Ovary (tissue), 10 donors: ENCODE measurements at regions of chr19 and their contacts with region 1.

Region 1: GRCh38 chr19:55503502-55504251 is 15.4 kb downstream of the SSC5D start:
- DNase-seq: peak; percentile 89 to 94 (median 91)
- H3K4me3 ChIP-seq: peak overlapping the region; percentile 17
- H3K27ac ChIP-seq: no peak overlapping the region
- H3K4me1 ChIP-seq: no peaks in the 10 kb centered on the region
- H3K27me3 ChIP-seq: no peaks in the 10 kb centered on the region
- CTCF ChIP-seq: peak; percentile 88 to 96 (median 94)
- EP300 ChIP-seq: no peak
- POLR2A ChIP-seq: peak; percentile 15

Region 2: GRCh38 chr19:55146078-55146704 is 357.5 kb before region 1 on chr19:
- intact Hi-C with region 1: loop called in 2 of 4 experiments (anchors 10 kb)
- DNase-seq: no peak
- H3K4me3 ChIP-seq: no peak overlapping the region
- H3K27ac ChIP-seq: no peak overlapping the region
- H3K4me1 ChIP-seq: no peaks in the 10 kb centered on the region
- H3K27me3 ChIP-seq: peaks cover 5% of the 10 kb centered on the region
- CTCF ChIP-seq: no peak
- EP300 ChIP-seq: no peak
- POLR2A ChIP-seq: no peak

Region 3: GRCh38 chr19:55301459-55302317 is 202.0 kb before region 1 on chr19:
- intact Hi-C with region 1: loop called in 1 of 4 experiments (anchors 10 kb)
- DNase-seq: peak; percentile 86 to 93 (median 91)
- H3K4me3 ChIP-seq: peak overlapping the region; percentile 28
- H3K27ac ChIP-seq: no peak overlapping the region
- H3K4me1 ChIP-seq: peaks cover 1% of the 10 kb centered on the region
- H3K27me3 ChIP-seq: no peaks in the 10 kb centered on the region
- CTCF ChIP-seq: peak; percentile 88 to 93 (median 89)
- EP300 ChIP-seq: no peak
- POLR2A ChIP-seq: no peak

Region 4: GRCh38 chr19:55418185-55418584 is 85.5 kb before region 1 on chr19:
- intact Hi-C with region 1: loop called in 1 of 4 experiments (anchors 10 kb)
- DNase-seq: peak in 2 of 5 donors; percentile 31 to 53
- H3K4me3 ChIP-seq: no peak overlapping the region
- H3K27ac ChIP-seq: no peak overlapping the region
- H3K4me1 ChIP-seq: no peaks in the 10 kb centered on the region
- H3K27me3 ChIP-seq: no peaks in the 10 kb centered on the region
- CTCF ChIP-seq: peak; percentile 21 to 53 (median 29)
- EP300 ChIP-seq: no peak
- POLR2A ChIP-seq: no peak

Region 5: GRCh38 chr19:55467236-55468053 is 36.2 kb before region 1 on chr19:
- intact Hi-C with region 1: loop called in 3 of 4 experiments (anchors 5 kb)
- DNase-seq: peak; percentile 70 to 88 (median 80)
- H3K4me3 ChIP-seq: no peak overlapping the region
- H3K27ac ChIP-seq: no peak overlapping the region
- H3K4me1 ChIP-seq: peaks cover 3% of the 10 kb centered on the region
- H3K27me3 ChIP-seq: no peaks in the 10 kb centered on the region
- CTCF ChIP-seq: peak; percentile 94 to 99 (median 96)
- EP300 ChIP-seq: no peak
- POLR2A ChIP-seq: no peak

Region 6: GRCh38 chr19:55632463-55632834 is 128.8 kb after region 1 on chr19:
- intact Hi-C with region 1: no loop called
- DNase-seq: peak; percentile 63 to 93 (median 81)
- H3K4me3 ChIP-seq: no peak overlapping the region
- H3K27ac ChIP-seq: no peak overlapping the region
- H3K4me1 ChIP-seq: peaks cover 10% of the 10 kb centered on the region
- H3K27me3 ChIP-seq: no peaks in the 10 kb centered on the region
- CTCF ChIP-seq: peak; percentile 77 to 90 (median 79)
- EP300 ChIP-seq: no peak
- POLR2A ChIP-seq: no peak

Region 7: GRCh38 chr19:55720214-55720746 is 216.6 kb after region 1 on chr19:
- intact Hi-C with region 1: no loop called
- DNase-seq: no peak
- H3K4me3 ChIP-seq: no peak overlapping the region
- H3K27ac ChIP-seq: no peak overlapping the region
- H3K4me1 ChIP-seq: no peaks in the 10 kb centered on the region
- H3K27me3 ChIP-seq: no peaks in the 10 kb centered on the region
- CTCF ChIP-seq: no peak
- EP300 ChIP-seq: no peak
- POLR2A ChIP-seq: no peak